Breast epithelium (tissue), 4 donors: ENCODE measurements at regions of chr6 and their contacts with region 1.

Region 1: DNA sequence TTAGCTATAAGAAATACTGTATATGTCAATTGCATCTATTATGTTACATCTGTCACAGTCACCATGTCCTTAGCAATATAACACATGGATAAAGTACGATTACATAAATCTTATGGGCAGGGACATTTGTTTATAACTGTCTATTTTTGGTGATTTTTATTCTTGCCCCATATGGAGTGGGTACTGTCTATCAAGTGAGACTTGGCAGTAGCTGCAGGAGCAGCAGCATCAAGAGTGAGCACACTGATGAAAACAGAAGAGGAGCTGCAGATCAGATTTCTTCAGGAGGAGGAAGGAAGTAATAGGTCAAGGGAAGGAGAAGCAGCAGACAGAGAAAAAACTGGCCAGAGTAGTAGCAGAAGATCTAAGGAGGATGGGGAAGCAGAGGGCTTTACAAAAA is 516.7 kb downstream of the C6orf118 start:
- DNase-seq: no peak
- H3K4me3 ChIP-seq: no peak overlapping the region
- H3K27ac ChIP-seq: no peak overlapping the region
- H3K4me1 ChIP-seq: no peaks in the 10 kb centered on the region
- H3K27me3 ChIP-seq: no peaks in the 10 kb centered on the region
- CTCF ChIP-seq: no peak
- POLR2A ChIP-seq: no peak

Region 2: GRCh38 chr6:164825386-164825785 is 32.7 kb after region 1 on chr6:
- intact Hi-C with region 1: loop called (anchors 2 kb)
- DNase-seq: no peak
- H3K4me3 ChIP-seq: no peak overlapping the region
- H3K27ac ChIP-seq: no peak overlapping the region
- H3K4me1 ChIP-seq: no peaks in the 10 kb centered on the region
- H3K27me3 ChIP-seq: no peaks in the 10 kb centered on the region
- CTCF ChIP-seq: no peak
- POLR2A ChIP-seq: no peak